OCI-LY7 (cell line): ENCODE measurements at regions of chr3 and their contacts with region 1.

Region 1: DNA sequence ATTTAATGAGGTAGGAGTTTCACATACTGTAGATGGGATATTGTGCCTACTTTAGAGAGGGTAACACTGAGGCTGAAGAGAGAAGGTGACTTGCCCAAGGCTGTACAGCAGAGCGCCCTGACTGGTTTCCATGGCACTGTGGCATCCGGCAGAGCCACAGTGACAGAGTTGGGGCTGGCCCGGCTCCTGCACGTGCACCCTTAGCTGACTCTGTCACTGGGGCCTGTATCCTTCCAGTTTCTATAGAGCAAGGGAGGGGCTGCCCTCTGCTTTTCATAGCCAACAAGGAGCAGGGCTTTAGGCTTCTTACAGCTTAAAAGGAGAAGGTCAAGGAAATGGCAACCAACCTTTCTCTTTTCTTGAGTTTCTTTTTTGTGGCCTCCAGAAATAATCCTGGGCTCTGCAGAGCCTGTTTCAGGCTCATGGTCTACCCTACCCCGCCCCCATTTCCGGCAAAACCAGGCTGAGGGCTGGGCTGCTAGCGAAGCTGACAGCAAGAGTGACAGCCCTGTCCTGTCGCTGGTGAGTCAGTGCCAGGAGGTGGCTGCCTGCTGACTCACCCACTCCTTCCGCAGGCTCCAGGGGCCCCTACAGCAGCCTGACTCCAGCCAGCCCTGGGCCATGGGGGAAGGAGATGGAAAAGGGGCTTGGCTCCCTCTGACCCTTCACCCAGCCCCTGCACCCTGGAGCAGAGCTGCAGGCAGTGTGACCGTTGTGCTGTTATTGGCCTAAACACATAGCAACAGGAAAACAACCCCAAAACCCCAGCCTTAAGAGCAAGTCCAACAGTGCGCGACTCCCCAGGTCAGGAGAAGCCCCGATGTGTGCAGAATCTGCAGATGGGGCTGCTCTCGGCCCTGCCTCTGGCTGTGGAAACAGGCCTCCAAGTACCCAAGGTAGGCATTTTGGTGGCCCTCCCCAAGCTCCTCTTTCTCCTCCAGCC is 29.8 kb downstream of the SLC6A6 start:
- DNase-seq: peak; percentile 91
- H3K4me3 ChIP-seq: peak overlapping the region; percentile 57
- H3K27ac ChIP-seq: peak overlapping the region; percentile 90
- H3K4me1 ChIP-seq: peaks cover 71% of the 10 kb centered on the region
- CTCF ChIP-seq: no peak

Region 2: GRCh38 chr3:14467814-14468620 is 35.9 kb after region 1 on chr3:
- CTCF ChIA-PET with region 1: no interaction called
- POLR2A ChIA-PET with region 1: no interaction called
- intact Hi-C with region 1: loop called (anchors 2 kb)
- DNase-seq: peak; percentile 53
- H3K4me3 ChIP-seq: no peak overlapping the region
- H3K27ac ChIP-seq: no peak overlapping the region
- H3K4me1 ChIP-seq: no peaks in the 10 kb centered on the region
- CTCF ChIP-seq: peak; percentile 92

Region 3: GRCh38 chr3:14969671-14970070 is 537.5 kb after region 1 on chr3:
- CTCF ChIA-PET with region 1: no interaction called
- POLR2A ChIA-PET with region 1: no interaction called
- intact Hi-C with region 1: no loop called
- DNase-seq: no peak
- H3K4me3 ChIP-seq: no peak overlapping the region
- H3K27ac ChIP-seq: no peak overlapping the region
- H3K4me1 ChIP-seq: no peaks in the 10 kb centered on the region
- CTCF ChIP-seq: no peak

Region 4: GRCh38 chr3:15098503-15099363 is 666.6 kb after region 1 on chr3 and contains the start of gene RBSN:
- CTCF ChIA-PET with region 1: no interaction called
- POLR2A ChIA-PET with region 1: no interaction called
- intact Hi-C with region 1: loop called (anchors 5 kb)
- DNase-seq: peak; percentile 97
- H3K4me3 ChIP-seq: peak within 1 kb of the TSS; percentile 88
- H3K27ac ChIP-seq: peak within 1 kb of the TSS; percentile 39
- H3K4me1 ChIP-seq: peaks cover 16% of the 10 kb centered on the region
- CTCF ChIP-seq: no peak
- total RNA-seq, gene RBSN: 13.3 and 20.6 TPM in 2 replicates